AG04449 (cell line): ENCODE measurements at regions of chr16 and their contacts with region 1.

Region 1: GRCh38 chr16:25279491-25279890 is 21.8 kb upstream of the ZKSCAN2 start:
- DNase-seq: no peak
- H3K4me3 ChIP-seq: no peak overlapping the region
- CTCF ChIP-seq: no peak

Region 2: DNA sequence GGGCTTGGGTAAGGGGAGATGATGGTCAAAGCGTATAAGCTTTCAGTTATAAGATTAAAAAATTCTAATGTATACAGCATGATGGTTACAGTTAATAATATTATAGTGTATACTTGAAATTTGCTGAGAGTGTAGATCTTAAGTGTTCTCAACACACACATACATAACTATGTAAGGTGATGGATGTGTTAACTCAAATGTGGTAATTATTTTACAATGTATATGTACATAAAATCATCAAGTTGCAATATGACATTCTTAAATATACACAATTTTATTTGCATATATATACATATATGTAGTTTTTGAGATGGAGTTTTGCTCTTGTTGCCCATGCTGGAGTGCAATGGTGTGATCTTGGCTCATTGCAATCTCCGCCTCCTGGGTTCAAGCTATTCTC is 29.0 kb before region 1 on chr16:
- CTCF ChIA-PET with region 1: no interaction called
- POLR2A ChIA-PET with region 1: no interaction called
- DNase-seq: no peak
- H3K4me3 ChIP-seq: no peak overlapping the region
- CTCF ChIP-seq: no peak

Region 3: GRCh38 chr16:25264597-25264996 is 14.9 kb before region 1 on chr16:
- CTCF ChIA-PET with region 1: interaction called, 20 read pairs
- POLR2A ChIA-PET with region 1: no interaction called
- DNase-seq: no peak
- H3K4me3 ChIP-seq: no peak overlapping the region
- CTCF ChIP-seq: no peak

Region 4: GRCh38 chr16:25413985-25414384 is 134.5 kb after region 1 on chr16:
- CTCF ChIA-PET with region 1: no interaction called
- POLR2A ChIA-PET with region 1: no interaction called
- DNase-seq: no peak
- H3K4me3 ChIP-seq: no peak overlapping the region
- CTCF ChIP-seq: no peak